Psoas muscle (tissue), 8 donors: ENCODE measurements at regions of chr10 and their contacts with region 1.

Region 1: DNA sequence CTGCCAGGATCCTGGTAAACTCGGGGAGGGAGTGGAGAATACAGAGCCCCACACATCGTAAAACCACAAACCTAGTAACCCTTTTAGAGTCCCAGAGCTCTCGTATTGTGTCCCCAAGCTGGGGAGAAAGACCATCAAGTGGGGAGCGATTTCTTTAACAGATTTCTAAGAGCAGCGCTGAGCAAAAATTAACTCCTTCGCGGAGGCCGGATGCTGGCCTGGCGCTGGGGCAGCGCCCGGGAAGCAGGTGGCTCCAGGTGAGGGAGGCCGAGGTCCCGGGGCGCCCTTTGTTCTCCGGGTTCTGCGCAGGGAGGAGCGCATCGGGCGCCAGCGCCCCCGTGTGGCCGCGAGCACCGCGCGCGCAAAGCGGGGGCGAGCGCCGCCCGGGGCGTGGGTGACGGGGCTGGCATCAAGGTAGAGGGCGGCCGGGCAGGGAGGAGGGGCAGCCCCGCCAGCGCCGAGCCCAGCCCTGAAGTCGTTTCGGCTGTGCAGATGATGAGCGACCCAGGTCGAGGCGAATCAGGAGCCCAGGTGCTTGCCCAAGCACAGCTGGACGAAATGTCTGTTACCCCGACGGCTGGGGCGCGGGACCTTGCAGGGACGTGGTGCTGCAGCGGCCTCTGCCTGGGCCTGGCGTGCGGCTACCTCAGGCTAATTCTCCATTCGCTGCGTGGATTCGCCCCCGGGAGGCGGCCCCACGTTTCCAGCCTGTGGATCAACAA is 10.4 kb upstream of the FGFR2 start:
- DNase-seq: peak in 1 of 2 donors; percentile 29
- ATAC-seq: peak in 3 of 4 donors; percentile 52 to 80 (median 79)
- H3K4me3 ChIP-seq: peak overlapping the region; percentile 41
- H3K27ac ChIP-seq: no peak overlapping the region
- H3K4me1 ChIP-seq: no peaks in the 10 kb centered on the region
- H3K27me3 ChIP-seq: peaks cover 0 to 51% (median 6%) of the 10 kb centered on the region in 3 donors
- CTCF ChIP-seq: peak; percentile 65

Region 2: GRCh38 chr10:120948889-120949608 is 659.6 kb before region 1 on chr10:
- intact Hi-C with region 1: loop called (anchors 5 kb)
- DNase-seq: peak; percentile 66 to 73
- ATAC-seq: peak; percentile 68 to 88 (median 83)
- H3K4me3 ChIP-seq: peak overlapping the region; percentile 55
- H3K27ac ChIP-seq: no peak overlapping the region
- H3K4me1 ChIP-seq: peaks cover 9% of the 10 kb centered on the region
- H3K27me3 ChIP-seq: peaks cover 0 to 38% (median 5%) of the 10 kb centered on the region in 3 donors
- CTCF ChIP-seq: peak; percentile 70

Region 3: DNA sequence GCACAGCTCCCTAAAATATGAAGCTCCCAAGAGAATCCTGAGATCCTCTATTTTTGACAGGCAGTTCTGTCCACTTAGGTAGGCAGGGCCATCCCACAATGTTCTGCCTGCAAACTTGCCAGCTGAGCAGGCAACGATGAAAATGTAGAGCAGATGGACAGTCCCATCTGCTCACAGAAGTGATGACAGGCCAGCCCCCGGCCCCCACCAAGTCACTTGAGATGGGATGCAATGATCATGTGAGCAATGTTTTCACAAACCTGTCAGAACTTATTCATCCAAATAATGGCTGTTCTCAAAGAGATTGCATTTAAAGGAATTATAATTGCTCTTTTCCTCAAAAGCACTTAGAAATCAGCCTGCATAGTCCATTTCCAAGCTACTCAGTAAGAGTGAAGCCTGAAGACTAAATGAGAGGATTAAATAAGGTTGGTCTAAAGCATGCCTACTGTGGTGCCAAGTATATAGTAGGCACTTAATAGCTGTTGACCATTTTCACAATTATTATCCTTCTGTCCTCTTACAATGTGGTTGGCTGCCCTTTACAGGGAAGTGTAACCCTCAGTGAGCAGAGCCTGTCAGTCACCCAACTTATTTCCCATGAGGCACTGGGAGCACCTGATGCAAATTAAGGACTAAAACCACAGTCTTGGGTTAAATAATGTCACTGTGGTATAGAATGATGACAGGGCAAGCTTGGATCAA is 311.6 kb before region 1 on chr10:
- intact Hi-C with region 1: no loop called
- DNase-seq: no peak
- ATAC-seq: no peak
- H3K4me3 ChIP-seq: no peak overlapping the region
- H3K27ac ChIP-seq: no peak overlapping the region
- H3K4me1 ChIP-seq: no peaks in the 10 kb centered on the region
- H3K27me3 ChIP-seq: peaks cover 0 to 4% (median 0%) of the 10 kb centered on the region in 3 donors
- CTCF ChIP-seq: no peak

Region 4: DNA sequence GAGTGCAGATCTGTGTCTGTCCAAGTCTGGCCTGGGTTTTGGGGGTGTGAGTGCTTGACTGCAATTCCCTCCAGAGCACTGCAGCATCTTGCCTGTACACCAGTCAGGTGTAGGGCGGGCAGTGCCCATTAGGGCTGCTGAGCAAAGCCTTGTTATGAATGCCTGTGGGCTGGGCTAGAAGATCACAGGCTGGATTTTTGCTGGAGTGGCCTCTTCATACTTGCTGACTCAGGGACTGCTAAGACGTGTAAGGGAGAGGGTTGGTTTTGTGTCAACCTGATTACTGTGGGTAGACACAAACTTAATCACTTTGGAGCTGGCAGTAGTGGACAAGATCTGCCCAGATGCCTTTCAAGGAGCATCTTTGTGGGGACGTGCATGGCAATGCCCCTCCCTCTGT is 981.5 kb after region 1 on chr10:
- intact Hi-C with region 1: no loop called
- DNase-seq: no peak
- ATAC-seq: no peak
- H3K4me3 ChIP-seq: no peak overlapping the region
- H3K27ac ChIP-seq: no peak overlapping the region
- H3K4me1 ChIP-seq: no peaks in the 10 kb centered on the region
- H3K27me3 ChIP-seq: no peaks in the 10 kb centered on the region
- CTCF ChIP-seq: no peak